Sigmoid colon (tissue), 7 donors: ENCODE measurements at regions of chr12 and their contacts with region 1.

Region 1: DNA sequence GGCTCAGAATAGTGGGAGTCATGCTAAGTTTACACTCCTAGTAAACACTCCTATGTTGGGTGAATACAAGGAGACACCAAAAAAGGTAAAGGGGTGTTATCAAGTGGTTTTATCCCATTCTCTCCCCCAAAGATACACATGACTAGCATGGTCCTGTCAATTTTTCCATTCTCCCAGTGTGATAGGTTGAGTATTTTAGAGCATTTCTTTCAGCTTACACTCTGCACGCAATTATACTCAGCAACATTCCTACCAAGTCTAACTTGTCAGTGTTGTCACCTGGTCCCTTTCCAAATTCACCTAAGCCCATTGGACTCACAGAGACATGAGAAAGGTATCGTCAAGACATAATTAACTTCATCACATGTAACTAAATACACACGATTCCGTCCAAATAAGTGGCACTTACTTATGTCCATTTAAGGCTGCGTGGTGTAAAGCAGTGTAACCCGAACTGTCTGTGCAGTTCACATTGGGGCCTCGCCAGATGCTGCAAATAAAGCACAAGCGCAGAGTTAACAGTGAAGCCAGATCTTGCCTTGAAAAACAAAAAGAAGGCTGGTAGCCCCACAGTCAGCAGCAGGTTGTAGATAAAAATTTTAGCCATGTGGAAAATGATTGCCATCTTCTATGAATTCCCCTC is 159.7 kb downstream of the ANKS1B start:
- DNase-seq: no peak
- H3K4me3 ChIP-seq: peak overlapping the region in 3 of 4 donors; percentile 25 to 29 (median 27)
- H3K27ac ChIP-seq: peak overlapping the region in 3 of 4 donors; percentile 47 to 58 (median 55)
- H3K4me1 ChIP-seq: peaks cover 0 to 14% (median 7%) of the 10 kb centered on the region in 4 donors
- H3K27me3 ChIP-seq: no peaks in the 10 kb centered on the region
- CTCF ChIP-seq: no peak
- EP300 ChIP-seq: no peak
- POLR2A ChIP-seq: no peak

Region 2: GRCh38 chr12:99772274-99772673 is 52.7 kb before region 1 on chr12:
- intact Hi-C with region 1: no loop called
- DNase-seq: no peak
- H3K4me3 ChIP-seq: no peak overlapping the region
- H3K27ac ChIP-seq: no peak overlapping the region
- H3K4me1 ChIP-seq: peaks cover 0 to 3% (median 0%) of the 10 kb centered on the region in 4 donors
- H3K27me3 ChIP-seq: no peaks in the 10 kb centered on the region
- CTCF ChIP-seq: no peak
- EP300 ChIP-seq: no peak
- POLR2A ChIP-seq: no peak

Region 3: GRCh38 chr12:99911081-99911480 is 86.1 kb after region 1 on chr12:
- intact Hi-C with region 1: loop called (anchors 5 kb)
- DNase-seq: peak; percentile 70
- H3K4me3 ChIP-seq: peak overlapping the region in 3 of 4 donors; percentile 23 to 31 (median 29)
- H3K27ac ChIP-seq: peak overlapping the region; percentile 78 to 86 (median 82)
- H3K4me1 ChIP-seq: peaks cover 2 to 43% (median 28%) of the 10 kb centered on the region in 4 donors
- H3K27me3 ChIP-seq: no peaks in the 10 kb centered on the region
- CTCF ChIP-seq: no peak
- EP300 ChIP-seq: peak in 1 of 4 donors; percentile 13
- POLR2A ChIP-seq: no peak

Region 4: DNA sequence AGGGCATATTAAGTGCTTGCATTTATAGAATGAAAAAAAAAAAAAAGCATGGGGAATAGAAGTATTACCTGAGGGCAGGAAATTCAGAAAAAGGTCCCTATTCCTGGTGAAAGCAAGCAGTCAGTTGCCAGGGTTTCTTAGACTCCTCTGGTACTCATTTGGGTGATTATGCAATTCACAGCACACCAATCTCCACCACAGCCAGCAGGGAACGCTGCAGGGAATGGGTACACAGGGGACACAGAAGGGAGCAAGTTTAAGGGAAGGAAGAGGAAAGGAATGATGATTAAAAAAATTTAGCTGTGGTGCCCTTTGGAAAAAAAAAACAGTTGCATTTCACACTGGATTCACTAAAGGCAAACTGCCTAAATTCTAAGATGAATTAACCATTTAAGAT is 303.5 kb after region 1 on chr12:
- intact Hi-C with region 1: no loop called
- DNase-seq: no peak
- H3K4me3 ChIP-seq: no peak overlapping the region
- H3K27ac ChIP-seq: peak overlapping the region in 2 of 4 donors; percentile 20 to 31
- H3K4me1 ChIP-seq: peaks cover 0 to 39% (median 29%) of the 10 kb centered on the region in 4 donors
- H3K27me3 ChIP-seq: no peaks in the 10 kb centered on the region
- CTCF ChIP-seq: peak in 1 of 4 experiments; percentile 28
- EP300 ChIP-seq: no peak
- POLR2A ChIP-seq: no peak